ENCODE measurements at regions of chr1 and their contacts with region 1.

Region 1: GRCh38 chr1:179081687-179082332 is at the start of gene TOR3A:
- DNase-seq: peak; percentile 89
- H3K4me3 Mint-ChIP-seq: peak within 1 kb of the TSS; percentile 89
- H3K27ac Mint-ChIP-seq: peak within 1 kb of the TSS; percentile 91
- H3K4me1 Mint-ChIP-seq: peaks cover 23% of the 10 kb centered on the region
- H3K27me3 Mint-ChIP-seq: no peaks in the 10 kb centered on the region
- total RNA-seq, gene TOR3A: 35.7 to 36.7 TPM

Region 2: GRCh38 chr1:178542560-178543356 is 539.1 kb before region 1 on chr1:
- CTCF ChIA-PET with region 1: no interaction called
- POLR2A ChIA-PET with region 1: no interaction called
- intact Hi-C with region 1: loop called (anchors 1 kb)
- DNase-seq: peak; percentile 94
- H3K4me3 Mint-ChIP-seq: peak overlapping the region; percentile 85
- H3K27ac Mint-ChIP-seq: peak overlapping the region; percentile 79
- H3K4me1 Mint-ChIP-seq: peaks cover 6% of the 10 kb centered on the region
- H3K27me3 Mint-ChIP-seq: no peaks in the 10 kb centered on the region

Region 3: DNA sequence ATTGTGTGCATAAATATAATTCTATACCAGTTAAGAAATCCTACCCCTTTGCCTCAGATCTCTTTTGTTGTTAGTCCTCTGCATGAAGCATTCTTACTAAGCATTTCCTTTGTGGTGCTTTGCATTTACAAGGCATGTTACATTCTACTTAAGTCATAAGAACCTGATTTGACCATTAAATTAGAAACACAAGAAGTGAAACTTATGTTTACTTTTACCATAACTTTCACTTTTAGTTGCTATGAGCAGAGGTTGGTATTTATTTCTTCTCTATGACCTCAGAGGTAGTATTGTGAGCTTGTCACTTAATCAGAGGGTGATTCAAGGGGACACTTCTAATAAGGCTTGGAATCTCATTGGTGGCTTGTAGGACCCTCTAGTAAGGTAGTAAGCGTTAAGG is 47.1 kb before region 1 on chr1:
- CTCF ChIA-PET with region 1: interaction called, 4 read pairs
- POLR2A ChIA-PET with region 1: interaction called, 3 read pairs
- intact Hi-C with region 1: loop called (anchors 1 kb)
- DNase-seq: no peak
- H3K4me3 Mint-ChIP-seq: no peak overlapping the region
- H3K27ac Mint-ChIP-seq: peak overlapping the region; percentile 68
- H3K4me1 Mint-ChIP-seq: peaks cover 85% of the 10 kb centered on the region
- H3K27me3 Mint-ChIP-seq: no peaks in the 10 kb centered on the region

Region 4: DNA sequence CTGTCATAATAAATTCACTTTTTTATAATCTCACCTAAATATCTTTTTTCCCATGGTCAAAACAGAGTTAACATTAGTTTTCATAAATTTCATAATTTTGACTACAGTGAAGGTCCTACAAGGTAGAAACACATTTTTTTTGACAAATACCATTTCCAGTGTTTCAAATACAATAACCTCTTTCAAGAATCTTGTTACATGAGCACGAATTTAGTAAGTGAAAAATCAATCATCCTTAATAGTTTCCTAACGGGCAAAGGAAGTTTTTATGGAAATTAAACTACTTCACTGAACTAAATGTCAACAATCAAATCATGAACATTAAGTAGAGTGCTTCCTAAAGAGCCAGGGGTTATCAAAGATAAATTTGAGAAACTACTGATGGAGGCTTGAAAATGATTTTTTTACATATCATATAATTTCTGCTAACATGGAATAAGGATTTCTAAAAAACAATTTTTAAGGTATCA is 112.3 kb after region 1 on chr1:
- CTCF ChIA-PET with region 1: interaction called, 4 read pairs
- POLR2A ChIA-PET with region 1: no interaction called
- intact Hi-C with region 1: loop called (anchors 2 kb)
- DNase-seq: no peak
- H3K4me3 Mint-ChIP-seq: no peak overlapping the region
- H3K27ac Mint-ChIP-seq: no peak overlapping the region
- H3K4me1 Mint-ChIP-seq: peaks cover 17% of the 10 kb centered on the region
- H3K27me3 Mint-ChIP-seq: no peaks in the 10 kb centered on the region

Region 5: DNA sequence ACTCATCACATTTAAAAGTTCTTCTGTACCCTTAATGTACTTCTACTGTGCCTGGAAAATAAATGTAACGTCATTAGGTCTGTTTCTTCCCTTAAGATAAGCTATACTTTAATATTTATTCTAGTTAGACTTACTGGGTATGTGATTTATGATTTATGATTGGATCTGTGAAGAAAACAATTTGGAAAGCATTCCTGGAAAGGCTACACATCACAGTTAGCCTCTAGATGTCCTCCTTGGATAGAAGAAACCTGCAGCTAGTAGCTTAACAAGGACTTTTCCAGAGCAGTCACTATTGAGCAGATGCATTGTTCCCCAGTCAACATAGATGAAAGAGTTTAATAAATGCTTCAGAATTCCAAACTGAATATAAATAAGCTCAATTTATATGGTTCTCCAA is 169.9 kb after region 1 on chr1:
- CTCF ChIA-PET with region 1: no interaction called
- POLR2A ChIA-PET with region 1: no interaction called
- intact Hi-C with region 1: no loop called
- DNase-seq: no peak
- H3K4me3 Mint-ChIP-seq: no peak overlapping the region
- H3K27ac Mint-ChIP-seq: no peak overlapping the region
- H3K4me1 Mint-ChIP-seq: no peaks in the 10 kb centered on the region
- H3K27me3 Mint-ChIP-seq: no peaks in the 10 kb centered on the region

Region 6: GRCh38 chr1:179293340-179294327 is 211.8 kb after region 1 on chr1 and contains the start of gene SOAT1:
- CTCF ChIA-PET with region 1: interaction called, 10 read pairs
- POLR2A ChIA-PET with region 1: interaction called, 9 read pairs
- intact Hi-C with region 1: loop called (anchors 1 kb)
- DNase-seq: peak; percentile 95
- H3K4me3 Mint-ChIP-seq: peak within 1 kb of the TSS; percentile 97
- H3K27ac Mint-ChIP-seq: peak within 1 kb of the TSS; percentile 91
- H3K4me1 Mint-ChIP-seq: peaks cover 41% of the 10 kb centered on the region
- H3K27me3 Mint-ChIP-seq: no peaks in the 10 kb centered on the region
- total RNA-seq, gene SOAT1: 37.8 to 42.9 TPM

Region 7: GRCh38 chr1:179599623-179600249 is 517.9 kb after region 1 on chr1:
- CTCF ChIA-PET with region 1: no interaction called
- POLR2A ChIA-PET with region 1: no interaction called
- intact Hi-C with region 1: loop called (anchors 10 kb)
- DNase-seq: no peak
- H3K4me3 Mint-ChIP-seq: no peak overlapping the region
- H3K27ac Mint-ChIP-seq: no peak overlapping the region
- H3K4me1 Mint-ChIP-seq: no peaks in the 10 kb centered on the region
- H3K27me3 Mint-ChIP-seq: peaks cover 7% of the 10 kb centered on the region